ENCODE measurements at regions of chr14 and their contacts with region 1.

Region 1: GRCh38 chr14:54175298-54175942 is 218.8 kb upstream of the BMP4 start:
- DNase-seq: peak; percentile 15 to 20
- ATAC-seq: peak in 1 of 2 donors; percentile 62
- H3K4me3 ChIP-seq: no peak overlapping the region
- H3K27ac ChIP-seq: no peak overlapping the region
- H3K4me1 ChIP-seq: peaks cover 0 to 14% of the 10 kb centered on the region in 2 donors
- H3K27me3 ChIP-seq: no peaks in the 10 kb centered on the region
- CTCF ChIP-seq: peak; percentile 59 to 82 (median 72)
- POLR2A ChIP-seq: no peak

Region 2: GRCh38 chr14:53432378-53432802 is 743.0 kb before region 1 on chr14:
- in situ Hi-C with region 1: no loop called
- intact Hi-C with region 1: loop called (anchors 10 kb)
- DNase-seq: no peak
- ATAC-seq: peak in 1 of 2 donors; percentile 36
- H3K4me3 ChIP-seq: no peak overlapping the region
- H3K27ac ChIP-seq: no peak overlapping the region
- H3K4me1 ChIP-seq: no peaks in the 10 kb centered on the region
- H3K27me3 ChIP-seq: no peaks in the 10 kb centered on the region
- CTCF ChIP-seq: peak in 4 of 5 experiments; percentile 22 to 42 (median 32)
- POLR2A ChIP-seq: no peak

Region 3: GRCh38 chr14:53979747-53980642 is 195.4 kb before region 1 on chr14:
- in situ Hi-C with region 1: no loop called
- intact Hi-C with region 1: loop called (anchors 10 kb)
- DNase-seq: peak; percentile 33 to 53
- ATAC-seq: peak; percentile 78 to 81
- H3K4me3 ChIP-seq: no peak overlapping the region
- H3K27ac ChIP-seq: no peak overlapping the region
- H3K4me1 ChIP-seq: no peaks in the 10 kb centered on the region
- H3K27me3 ChIP-seq: no peaks in the 10 kb centered on the region
- CTCF ChIP-seq: no peak
- POLR2A ChIP-seq: no peak

Region 4: GRCh38 chr14:54152351-54152750 is 23.1 kb before region 1 on chr14:
- in situ Hi-C with region 1: no loop called
- intact Hi-C with region 1: no loop called
- DNase-seq: no peak
- ATAC-seq: no peak
- H3K4me3 ChIP-seq: no peak overlapping the region
- H3K27ac ChIP-seq: no peak overlapping the region
- H3K4me1 ChIP-seq: no peaks in the 10 kb centered on the region
- H3K27me3 ChIP-seq: no peaks in the 10 kb centered on the region
- CTCF ChIP-seq: no peak
- POLR2A ChIP-seq: no peak

Region 5: DNA sequence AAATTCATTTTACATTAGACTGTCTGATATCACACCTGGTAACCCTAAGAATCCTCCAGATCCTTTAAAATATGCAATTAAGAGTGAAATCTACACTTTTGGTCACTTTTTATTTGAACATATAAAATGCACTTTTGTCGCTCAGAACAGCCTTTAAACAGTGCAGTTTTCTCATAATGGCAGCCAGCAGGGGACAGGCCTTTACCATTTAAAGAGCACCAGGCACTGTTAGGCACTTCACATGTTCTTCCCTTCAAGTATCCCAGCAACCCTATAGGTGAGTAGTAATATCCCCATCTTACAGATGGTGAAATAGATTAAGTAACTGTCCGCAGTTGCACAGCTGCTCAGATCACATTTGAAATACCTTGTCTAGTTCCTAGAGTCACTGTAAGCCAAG is 380.2 kb after region 1 on chr14:
- in situ Hi-C with region 1: no loop called
- intact Hi-C with region 1: no loop called
- DNase-seq: no peak
- ATAC-seq: no peak
- H3K4me3 ChIP-seq: no peak overlapping the region
- H3K27ac ChIP-seq: no peak overlapping the region
- H3K4me1 ChIP-seq: no peaks in the 10 kb centered on the region
- H3K27me3 ChIP-seq: no peaks in the 10 kb centered on the region
- CTCF ChIP-seq: no peak
- POLR2A ChIP-seq: no peak